ENCODE measurements at regions of chr6 and their contacts with region 1.

Region 1: GRCh38 chr6:3825851-3826581 is 23.2 kb upstream of the FAM50B start:
- DNase-seq: peak; percentile 93 to 96 (median 95)
- ATAC-seq: peak; percentile 95 to 97
- H3K4me3 ChIP-seq: no peak overlapping the region
- H3K27ac ChIP-seq: peak overlapping the region; percentile 86
- H3K4me1 ChIP-seq: peaks cover 2% of the 10 kb centered on the region
- H3K27me3 ChIP-seq: no peaks in the 10 kb centered on the region

Region 2: GRCh38 chr6:3751730-3752542 is 74.1 kb before region 1 on chr6:
- intact Hi-C with region 1: loop called in 2 of 4 experiments (anchors 2 to 5 kb)
- DNase-seq: peak; percentile 93 to 96 (median 96)
- ATAC-seq: peak; percentile 81 to 85
- H3K4me3 ChIP-seq: peak overlapping the region; percentile 51
- H3K27ac ChIP-seq: peak overlapping the region; percentile 86
- H3K4me1 ChIP-seq: peaks cover 3% of the 10 kb centered on the region
- H3K27me3 ChIP-seq: no peaks in the 10 kb centered on the region

Region 3: GRCh38 chr6:3766214-3766613 is 59.8 kb before region 1 on chr6:
- intact Hi-C with region 1: loop called in 1 of 4 experiments (anchors 10 kb)
- DNase-seq: no peak
- ATAC-seq: no peak
- H3K4me3 ChIP-seq: no peak overlapping the region
- H3K27ac ChIP-seq: no peak overlapping the region
- H3K4me1 ChIP-seq: no peaks in the 10 kb centered on the region
- H3K27me3 ChIP-seq: no peaks in the 10 kb centered on the region

Region 4: GRCh38 chr6:4066029-4066755 is 240.2 kb after region 1 on chr6:
- intact Hi-C with region 1: no loop called
- DNase-seq: no peak
- ATAC-seq: no peak
- H3K4me3 ChIP-seq: no peak overlapping the region
- H3K27ac ChIP-seq: no peak overlapping the region
- H3K4me1 ChIP-seq: no peaks in the 10 kb centered on the region
- H3K27me3 ChIP-seq: no peaks in the 10 kb centered on the region